ENCODE measurements at regions of chrX and their contacts with region 1.

Region 1: DNA sequence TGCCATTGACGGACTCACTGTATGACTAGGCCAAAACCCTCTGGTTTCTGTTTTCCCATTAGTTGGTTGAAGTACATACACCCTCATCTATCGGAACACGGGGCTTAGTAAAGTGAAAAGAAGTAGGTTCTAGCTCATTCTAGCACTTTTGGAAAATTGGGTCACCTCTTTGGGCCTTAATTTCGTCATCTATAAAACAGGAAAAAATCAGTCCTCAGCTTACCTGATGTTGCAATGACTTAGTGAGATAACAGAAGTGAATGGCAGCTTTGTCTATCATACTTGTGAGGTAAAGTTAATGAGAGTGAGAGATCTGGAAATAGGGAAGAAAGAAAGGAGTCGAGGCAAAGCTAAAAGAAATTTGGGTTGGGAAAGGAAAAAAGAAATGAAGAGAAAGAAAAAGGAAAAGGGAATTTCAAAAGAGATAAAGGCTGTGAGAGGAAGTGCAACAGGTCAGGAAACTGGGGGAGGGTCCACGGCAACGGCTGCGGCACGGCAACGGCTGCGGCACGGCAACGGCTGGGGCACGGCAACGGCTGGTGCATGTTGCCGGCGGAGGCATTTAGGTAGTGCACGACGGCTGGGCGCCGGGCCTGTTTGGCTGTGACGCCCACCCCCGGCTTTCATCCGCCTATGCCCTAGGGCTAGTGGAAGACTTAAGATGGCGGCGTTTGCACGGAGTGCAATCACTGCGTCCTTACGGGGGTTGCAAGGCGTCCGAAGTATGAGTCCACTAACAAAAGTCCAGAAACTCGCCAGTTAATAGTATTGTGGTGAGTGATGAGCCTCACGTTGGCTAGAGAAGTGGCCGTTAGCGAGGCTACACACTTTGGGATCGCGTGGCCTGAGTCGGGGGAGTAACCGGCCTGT is 360.1 kb upstream of the ZCCHC13 start:
- DNase-seq: peak; percentile 89
- H3K4me3 Mint-ChIP-seq: peak overlapping the region; percentile 79
- H3K27ac Mint-ChIP-seq: peak overlapping the region; percentile 85
- H3K4me1 Mint-ChIP-seq: peaks cover 15% of the 10 kb centered on the region
- H3K27me3 Mint-ChIP-seq: no peaks in the 10 kb centered on the region

Region 2: GRCh38 chrX:73214426-73215094 is 729.4 kb before region 1 on chrX and contains the start of gene NAP1L2:
- CTCF ChIA-PET with region 1: no interaction called
- POLR2A ChIA-PET with region 1: no interaction called
- intact Hi-C with region 1: loop called (anchors 10 kb)
- DNase-seq: peak; percentile 58
- H3K4me3 Mint-ChIP-seq: peak within 1 kb of the TSS; percentile 92
- H3K27ac Mint-ChIP-seq: peak within 1 kb of the TSS; percentile 78
- H3K4me1 Mint-ChIP-seq: peaks cover 16% of the 10 kb centered on the region
- H3K27me3 Mint-ChIP-seq: no peaks in the 10 kb centered on the region
- total RNA-seq, gene NAP1L2: 2.9 to 3.1 TPM

Region 3: DNA sequence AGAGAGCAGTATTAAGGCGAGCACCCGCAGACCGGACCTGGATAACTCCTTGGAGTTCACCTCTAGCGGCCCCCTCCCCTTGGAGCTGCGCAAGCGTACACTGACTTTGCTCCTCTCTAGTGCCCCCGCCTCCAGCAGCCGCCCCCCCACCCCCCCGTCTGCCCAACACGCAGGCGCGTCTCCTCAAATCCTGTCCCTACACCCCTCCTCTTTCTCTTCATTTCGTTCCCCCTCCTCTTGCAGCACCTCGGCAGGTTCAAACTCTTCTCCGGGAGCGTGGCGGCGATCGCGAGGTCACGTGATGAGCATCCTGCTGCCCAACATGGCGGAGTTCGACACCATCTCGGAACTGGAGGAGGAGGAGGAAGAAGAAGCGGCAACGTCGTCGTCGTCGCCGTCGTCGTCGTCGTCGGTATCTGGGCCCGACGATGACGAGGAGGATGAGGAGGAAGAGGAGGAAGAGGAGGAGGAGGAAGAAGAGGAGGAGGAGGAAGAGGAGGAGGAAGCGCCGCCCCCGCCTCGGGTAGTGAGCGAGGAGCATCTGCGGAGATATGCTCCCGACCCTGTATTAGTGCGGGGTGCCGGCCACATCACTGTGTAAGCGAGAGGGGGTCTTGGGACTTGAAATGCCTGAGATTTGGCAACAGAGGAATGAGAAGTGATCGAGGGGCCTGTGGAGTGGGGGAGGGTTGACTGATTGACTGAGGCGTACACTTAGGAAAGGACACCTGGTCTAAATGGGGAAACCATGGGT is 380.8 kb before region 1 on chrX and contains the start of gene CHIC1:
- CTCF ChIA-PET with region 1: no interaction called
- POLR2A ChIA-PET with region 1: no interaction called
- intact Hi-C with region 1: loop called (anchors 1 kb)
- DNase-seq: peak; percentile 78
- H3K4me3 Mint-ChIP-seq: peak within 1 kb of the TSS; percentile 90
- H3K27ac Mint-ChIP-seq: peak within 1 kb of the TSS; percentile 94
- H3K4me1 Mint-ChIP-seq: peaks cover 15% of the 10 kb centered on the region
- H3K27me3 Mint-ChIP-seq: no peaks in the 10 kb centered on the region
- total RNA-seq, gene CHIC1: 3.6 to 3.8 TPM

Region 4: GRCh38 chrX:73977534-73978169 is 33.7 kb after region 1 on chrX:
- CTCF ChIA-PET with region 1: no interaction called
- POLR2A ChIA-PET with region 1: no interaction called
- intact Hi-C with region 1: loop called (anchors 1 kb)
- DNase-seq: no peak
- H3K4me3 Mint-ChIP-seq: no peak overlapping the region
- H3K27ac Mint-ChIP-seq: peak overlapping the region; percentile 65
- H3K4me1 Mint-ChIP-seq: peaks cover 32% of the 10 kb centered on the region
- H3K27me3 Mint-ChIP-seq: no peaks in the 10 kb centered on the region

Measured in activated CD4-positive, alpha-beta memory T cell treated with anti-CD3 and anti-CD28 coated beads for 36 hours (primary cell).